H1 (cell line): ENCODE measurements at regions of chr13 and their contacts with region 1.

Region 1: GRCh38 chr13:52968074-52968700 is 60.4 kb upstream of the OLFM4 start:
- DNase-seq: peak; percentile 86 to 90
- H3K4me3 ChIP-seq: no peak overlapping the region
- H3K27ac ChIP-seq: no peak overlapping the region
- H3K4me1 ChIP-seq: peaks cover 0 to 4% (median 3%) of the 10 kb centered on the region in 4 experiments; a peak in 4 of 7 replicates
- H3K27me3 ChIP-seq: no peaks in the 10 kb centered on the region; a peak in 2 of 7 replicates
- CTCF ChIP-seq: peak; percentile 85 to 99 (median 99)
- EP300 ChIP-seq: no peak
- POLR2A ChIP-seq: no peak
- RAD21 ChIP-seq: peak; percentile 97 to 99

Region 2: GRCh38 chr13:52665325-52665724 is 302.9 kb before region 1 on chr13:
- CTCF ChIA-PET with region 1: interaction called, 15 read pairs
- POLR2A ChIA-PET with region 1: no interaction called
- DNase-seq: no peak
- H3K4me3 ChIP-seq: no peak overlapping the region
- H3K27ac ChIP-seq: no peak overlapping the region
- H3K4me1 ChIP-seq: no peaks in the 10 kb centered on the region
- H3K27me3 ChIP-seq: no peaks in the 10 kb centered on the region
- CTCF ChIP-seq: peak in 2 of 3 experiments; percentile 23 to 37; a peak in 2 of 4 replicates
- EP300 ChIP-seq: no peak
- POLR2A ChIP-seq: no peak
- RAD21 ChIP-seq: peak in 1 of 2 experiments; percentile 54; a peak in 3 of 4 replicates

Region 3: GRCh38 chr13:52868190-52868589 is 100.0 kb before region 1 on chr13:
- CTCF ChIA-PET with region 1: interaction called, 116 read pairs
- POLR2A ChIA-PET with region 1: no interaction called
- DNase-seq: no peak
- H3K4me3 ChIP-seq: no peak overlapping the region
- H3K27ac ChIP-seq: no peak overlapping the region
- H3K4me1 ChIP-seq: peaks cover 0 to 5% (median 2%) of the 10 kb centered on the region in 4 experiments; a peak in 2 of 7 replicates
- H3K27me3 ChIP-seq: 0 out of 7 replicates have a peak, but pooled peaks cover 0 to 2% (median 0%) of the 10 kb centered on the region in 4 experiments
- CTCF ChIP-seq: no peak
- EP300 ChIP-seq: no peak
- POLR2A ChIP-seq: no peak
- RAD21 ChIP-seq: no peak

Region 4: GRCh38 chr13:52916486-52916990 is 51.6 kb before region 1 on chr13:
- CTCF ChIA-PET with region 1: interaction called, 11 read pairs
- POLR2A ChIA-PET with region 1: no interaction called
- DNase-seq: no peak
- H3K4me3 ChIP-seq: no peak overlapping the region
- H3K27ac ChIP-seq: no peak overlapping the region
- H3K4me1 ChIP-seq: no peaks in the 10 kb centered on the region
- H3K27me3 ChIP-seq: no peaks in the 10 kb centered on the region
- CTCF ChIP-seq: no peak
- EP300 ChIP-seq: no peak
- POLR2A ChIP-seq: no peak
- RAD21 ChIP-seq: no peak

Region 5: GRCh38 chr13:52955472-52955874 is 12.7 kb before region 1 on chr13:
- CTCF ChIA-PET with region 1: interaction called, 63 read pairs
- POLR2A ChIA-PET with region 1: interaction called, 7 read pairs
- DNase-seq: peak; percentile 46 to 66
- H3K4me3 ChIP-seq: peak overlapping the region in 1 of 4 experiments; percentile 46; a peak in 3 of 8 replicates
- H3K27ac ChIP-seq: no peak overlapping the region
- H3K4me1 ChIP-seq: peaks cover 7 to 23% (median 16%) of the 10 kb centered on the region in 4 experiments; a peak in 6 of 7 replicates
- H3K27me3 ChIP-seq: peaks cover 0 to 2% (median 0%) of the 10 kb centered on the region in 4 experiments; a peak in 3 of 7 replicates
- CTCF ChIP-seq: no peak
- EP300 ChIP-seq: peak in 1 of 2 experiments; percentile 41; a peak in 1 of 3 replicates
- POLR2A ChIP-seq: no peak
- RAD21 ChIP-seq: 0 out of 4 replicates have a peak, but pooled peaks of 1 of the 2 experiments have one; percentile 2

Region 6: GRCh38 chr13:53144826-53145225 is 176.6 kb after region 1 on chr13:
- CTCF ChIA-PET with region 1: interaction called, 50 read pairs
- POLR2A ChIA-PET with region 1: no interaction called
- DNase-seq: no peak
- H3K4me3 ChIP-seq: no peak overlapping the region
- H3K27ac ChIP-seq: no peak overlapping the region
- H3K4me1 ChIP-seq: peaks cover 0 to 2% (median 0%) of the 10 kb centered on the region in 4 experiments; a peak in 2 of 7 replicates
- H3K27me3 ChIP-seq: no peaks in the 10 kb centered on the region
- CTCF ChIP-seq: no peak
- EP300 ChIP-seq: no peak
- POLR2A ChIP-seq: no peak
- RAD21 ChIP-seq: no peak